A673 (cell line): ENCODE measurements at regions of chr1 and their contacts with region 1.

Region 1: GRCh38 chr1:45884700-45885099 is 81.3 kb downstream of the MAST2 start:
- DNase-seq: no peak
- H3K4me3 ChIP-seq: no peak overlapping the region
- H3K27ac ChIP-seq: no peak overlapping the region
- H3K4me1 ChIP-seq: no peaks in the 10 kb centered on the region
- H3K27me3 ChIP-seq: no peaks in the 10 kb centered on the region
- CTCF ChIP-seq: no peak

Region 2: DNA sequence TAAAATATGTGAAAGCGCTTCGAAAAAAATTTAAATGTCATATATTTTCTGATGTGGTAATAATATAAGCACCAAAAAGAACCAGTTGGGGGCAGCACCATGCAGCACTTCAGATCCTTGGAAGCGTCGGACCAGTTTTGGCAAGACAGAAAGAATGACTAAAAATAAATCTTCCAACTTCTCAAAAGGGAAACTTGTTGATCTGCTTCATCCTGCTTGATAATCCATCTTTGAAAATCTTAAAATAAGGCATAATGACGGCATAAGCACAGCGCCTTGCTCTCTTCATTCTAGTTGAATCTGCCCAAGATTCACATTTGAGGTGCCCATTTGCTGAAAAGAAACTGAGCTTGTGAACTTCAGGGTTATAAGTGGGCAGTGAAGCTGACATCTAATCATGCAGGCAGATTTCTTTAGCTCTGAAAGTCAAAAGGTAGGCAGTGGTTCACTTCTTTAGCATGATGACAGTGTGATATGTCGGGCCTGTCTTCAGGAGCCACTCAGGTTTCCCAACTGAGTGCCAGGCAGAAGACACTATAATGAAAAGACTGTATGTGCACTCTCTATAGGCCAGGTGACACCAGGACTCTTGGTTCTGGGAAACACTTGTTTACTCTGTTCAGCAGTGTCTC is 524.7 kb before region 1 on chr1:
- CTCF ChIA-PET with region 1: no interaction called
- POLR2A ChIA-PET with region 1: no interaction called
- intact Hi-C with region 1: loop called (anchors 10 kb)
- DNase-seq: peak; percentile 72
- H3K4me3 ChIP-seq: no peak overlapping the region
- H3K27ac ChIP-seq: no peak overlapping the region
- H3K4me1 ChIP-seq: no peaks in the 10 kb centered on the region
- H3K27me3 ChIP-seq: no peaks in the 10 kb centered on the region
- CTCF ChIP-seq: peak; percentile 77

Region 3: GRCh38 chr1:45512641-45513054 is 372.1 kb before region 1 on chr1:
- CTCF ChIA-PET with region 1: no interaction called
- POLR2A ChIA-PET with region 1: no interaction called
- intact Hi-C with region 1: loop called (anchors 10 kb)
- DNase-seq: peak; percentile 63
- H3K4me3 ChIP-seq: no peak overlapping the region
- H3K27ac ChIP-seq: no peak overlapping the region
- H3K4me1 ChIP-seq: peaks cover 12% of the 10 kb centered on the region
- H3K27me3 ChIP-seq: no peaks in the 10 kb centered on the region
- CTCF ChIP-seq: peak; percentile 78

Region 4: DNA sequence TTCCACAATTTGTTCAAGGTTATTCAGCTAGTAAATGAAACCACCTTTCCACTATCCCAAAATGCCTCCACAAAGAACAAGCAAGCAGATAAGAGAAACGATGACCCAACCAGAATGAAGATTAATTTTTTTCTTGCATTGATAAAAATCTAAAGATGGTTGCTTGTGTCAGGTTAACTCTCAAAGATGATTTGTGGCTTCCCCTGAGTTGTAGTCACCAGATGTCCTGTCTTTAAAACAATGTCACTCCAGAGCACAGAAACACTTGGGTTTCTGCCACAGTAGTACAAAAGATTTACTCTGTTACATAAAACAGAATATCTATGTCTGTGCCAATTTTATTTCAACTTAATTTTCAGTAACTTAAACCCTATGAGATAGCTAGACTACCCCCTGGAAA is 249.5 kb before region 1 on chr1:
- CTCF ChIA-PET with region 1: no interaction called
- POLR2A ChIA-PET with region 1: no interaction called
- intact Hi-C with region 1: loop called (anchors 10 kb)
- DNase-seq: no peak
- H3K4me3 ChIP-seq: no peak overlapping the region
- H3K27ac ChIP-seq: no peak overlapping the region
- H3K4me1 ChIP-seq: no peaks in the 10 kb centered on the region
- H3K27me3 ChIP-seq: no peaks in the 10 kb centered on the region
- CTCF ChIP-seq: no peak

Region 5: DNA sequence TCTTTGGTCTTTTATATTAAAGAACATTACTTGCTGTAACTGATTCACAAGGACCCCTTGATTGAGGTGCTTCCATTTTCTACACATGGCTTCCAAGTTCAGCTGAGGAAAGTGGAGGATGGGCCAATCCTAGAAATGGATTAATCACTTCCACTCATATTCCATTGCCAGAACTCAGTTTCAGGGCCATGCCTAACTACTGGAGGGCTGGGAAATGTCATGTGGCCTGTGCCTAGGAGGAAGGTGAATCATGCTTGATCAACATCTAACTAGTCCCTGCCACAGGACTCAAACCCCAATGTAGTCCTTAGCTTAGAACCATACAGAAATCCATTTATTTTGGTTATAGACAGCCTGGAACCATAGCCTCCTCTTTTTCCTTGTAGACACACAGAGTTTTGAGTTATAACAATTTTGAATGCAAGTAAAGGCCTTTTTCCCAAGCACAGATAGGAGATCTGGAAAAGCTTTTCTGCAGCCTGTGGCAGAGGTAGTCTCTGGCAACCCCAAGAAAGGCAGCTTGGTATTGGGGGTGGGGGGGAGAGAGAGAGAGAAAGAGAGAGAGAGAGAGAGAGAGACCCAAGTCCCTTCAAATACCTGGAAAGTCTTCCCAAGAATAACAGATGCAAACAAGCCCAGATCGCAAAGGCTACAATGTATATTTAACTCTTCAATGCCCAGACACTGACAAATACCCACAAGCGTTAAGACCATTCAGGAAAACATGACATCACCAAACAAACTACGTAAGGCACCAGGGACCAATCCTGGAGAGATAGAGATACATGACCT is 68.8 kb before region 1 on chr1:
- CTCF ChIA-PET with region 1: no interaction called
- POLR2A ChIA-PET with region 1: no interaction called
- intact Hi-C with region 1: no loop called
- DNase-seq: no peak
- H3K4me3 ChIP-seq: no peak overlapping the region
- H3K27ac ChIP-seq: no peak overlapping the region
- H3K4me1 ChIP-seq: no peaks in the 10 kb centered on the region
- H3K27me3 ChIP-seq: no peaks in the 10 kb centered on the region
- CTCF ChIP-seq: no peak

Region 6: DNA sequence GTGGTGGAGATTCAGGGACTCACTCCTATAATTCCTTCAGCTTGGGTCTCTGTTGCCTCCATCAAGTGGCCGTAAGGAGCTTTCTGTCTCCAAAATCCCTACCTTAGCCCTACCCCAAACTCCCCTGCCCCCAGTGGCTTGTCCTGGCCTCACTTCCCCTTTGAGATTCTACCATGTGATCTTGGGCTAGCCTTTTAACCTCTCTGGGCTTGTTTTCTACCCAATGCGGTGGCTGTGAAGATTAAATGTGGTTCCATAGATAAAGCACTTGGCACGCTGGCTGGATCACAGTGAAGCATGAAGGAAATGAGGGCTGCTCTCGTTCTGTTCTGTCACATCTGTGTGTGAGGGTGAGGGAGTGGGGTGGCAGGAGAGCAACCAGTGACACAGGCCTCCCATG is 553.0 kb after region 1 on chr1:
- CTCF ChIA-PET with region 1: no interaction called
- POLR2A ChIA-PET with region 1: no interaction called
- intact Hi-C with region 1: no loop called
- DNase-seq: no peak
- H3K4me3 ChIP-seq: no peak overlapping the region
- H3K27ac ChIP-seq: no peak overlapping the region
- H3K4me1 ChIP-seq: no peaks in the 10 kb centered on the region
- H3K27me3 ChIP-seq: peaks cover 7% of the 10 kb centered on the region
- CTCF ChIP-seq: no peak